ENCODE measurements at regions of chr4 and their contacts with region 1.

Region 1: GRCh38 chr4:184937745-184938144 is 80.5 kb upstream of the HELT start:
- DNase-seq: peak in 1 of 2 experiments; percentile 23
- H3K4me3 ChIP-seq: no peak overlapping the region
- H3K4me3 Mint-ChIP-seq: no peak overlapping the region
- H3K27ac Mint-ChIP-seq: peak overlapping the region; percentile 85
- H3K4me1 ChIP-seq: peaks cover 39% of the 10 kb centered on the region
- H3K4me1 Mint-ChIP-seq: peaks cover 36% of the 10 kb centered on the region
- H3K27me3 ChIP-seq: no peaks in the 10 kb centered on the region
- H3K27me3 Mint-ChIP-seq: no peaks in the 10 kb centered on the region
- CTCF ChIP-seq: no peak

Region 2: DNA sequence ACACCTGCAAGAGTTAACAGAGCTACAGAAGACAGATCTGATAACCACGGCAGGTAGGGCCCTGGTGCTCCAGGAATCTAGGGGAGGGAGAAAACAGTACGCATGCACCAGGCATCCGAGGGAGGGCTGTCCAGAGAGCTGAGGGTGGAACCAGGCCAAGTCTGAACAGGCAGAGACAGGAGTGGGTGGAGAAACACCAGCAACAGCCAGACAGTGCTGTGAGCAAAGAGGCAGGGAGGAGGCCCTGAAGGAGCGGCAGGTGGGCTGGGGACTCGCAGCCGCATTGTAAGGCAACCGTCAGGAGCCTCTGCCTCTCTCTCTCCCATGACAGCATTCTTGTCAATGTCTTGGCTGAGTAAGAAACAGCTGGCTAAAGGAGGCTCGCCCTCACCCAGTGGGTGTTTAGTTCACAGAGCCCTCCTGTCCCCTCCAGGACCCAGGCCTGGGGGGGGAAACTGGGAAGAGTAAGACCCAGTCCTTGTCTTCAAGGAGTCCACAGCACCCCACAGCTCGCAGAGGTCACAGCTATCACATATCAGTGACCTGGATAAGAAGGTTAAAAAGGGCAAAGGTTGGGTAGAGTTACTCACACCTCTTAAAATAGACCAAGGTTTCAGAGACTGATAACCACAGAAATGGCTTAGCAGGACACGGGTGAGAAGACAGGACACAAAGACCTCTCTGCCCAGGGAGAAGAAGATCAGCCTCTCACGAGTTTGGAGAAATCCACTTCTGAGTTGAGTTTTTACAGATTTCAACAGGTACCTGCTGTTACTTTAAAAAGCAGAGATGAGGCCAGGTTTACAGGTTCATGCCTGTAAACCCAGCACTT is 122.5 kb before region 1 on chr4:
- CTCF ChIA-PET with region 1: interaction called, 3 read pairs
- POLR2A ChIA-PET with region 1: no interaction called
- intact Hi-C with region 1: loop called (anchors 1 kb)
- DNase-seq: peak; percentile 92 to 95
- H3K4me3 ChIP-seq: peak overlapping the region; percentile 6
- H3K4me3 Mint-ChIP-seq: peak overlapping the region; percentile 71
- H3K27ac Mint-ChIP-seq: peak overlapping the region; percentile 95
- H3K4me1 ChIP-seq: peaks cover 60% of the 10 kb centered on the region
- H3K4me1 Mint-ChIP-seq: peaks cover 49% of the 10 kb centered on the region
- H3K27me3 ChIP-seq: no peaks in the 10 kb centered on the region
- H3K27me3 Mint-ChIP-seq: no peaks in the 10 kb centered on the region
- CTCF ChIP-seq: no peak

Region 3: DNA sequence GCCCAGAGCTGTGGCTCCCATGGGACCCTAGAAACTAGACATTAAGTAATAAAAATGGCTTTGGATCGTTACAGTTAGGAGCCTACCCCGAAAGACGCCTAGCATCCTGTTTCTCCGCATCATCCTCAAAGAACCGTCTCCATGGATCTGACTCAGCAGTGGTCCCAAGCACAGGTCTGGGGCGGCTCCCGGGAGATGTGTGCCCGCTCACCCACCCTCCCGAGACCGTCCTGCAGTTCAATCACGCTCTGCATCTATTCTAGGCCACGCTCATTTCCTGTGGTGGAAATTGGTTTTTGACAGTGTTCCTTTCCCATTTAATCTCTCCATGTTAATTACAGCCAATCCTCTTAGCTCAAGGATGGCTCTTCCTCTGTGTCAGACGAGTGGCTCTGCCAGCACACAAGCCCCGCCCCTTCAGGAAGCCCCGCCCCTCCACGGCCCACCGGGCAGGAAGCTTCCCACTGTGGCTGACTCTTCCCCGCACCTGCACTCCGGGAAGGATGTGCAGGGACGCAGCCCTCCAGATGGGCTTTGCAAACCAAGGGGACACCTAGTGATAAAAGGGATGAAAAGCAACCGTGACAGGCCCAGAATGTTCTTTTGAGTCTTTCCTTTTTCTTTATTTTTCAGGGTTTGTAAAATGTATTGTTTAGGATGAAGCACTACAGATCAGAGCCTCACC is 46.1 kb after region 1 on chr4:
- CTCF ChIA-PET with region 1: no interaction called
- POLR2A ChIA-PET with region 1: no interaction called
- intact Hi-C with region 1: no loop called
- DNase-seq: peak; percentile 74 to 79
- H3K4me3 ChIP-seq: no peak overlapping the region
- H3K4me3 Mint-ChIP-seq: no peak overlapping the region
- H3K27ac Mint-ChIP-seq: no peak overlapping the region
- H3K4me1 ChIP-seq: no peaks in the 10 kb centered on the region
- H3K4me1 Mint-ChIP-seq: no peaks in the 10 kb centered on the region
- H3K27me3 ChIP-seq: no peaks in the 10 kb centered on the region
- H3K27me3 Mint-ChIP-seq: no peaks in the 10 kb centered on the region
- CTCF ChIP-seq: peak; percentile 39 to 44